ENCODE measurements at regions of chr16 and their contacts with region 1.

Region 1: GRCh38 chr16:1723450-1724147 is 17.6 kb downstream of the MAPK8IP3 start:
- DNase-seq: peak; percentile 60
- H3K4me3 ChIP-seq: no peak overlapping the region
- H3K27ac ChIP-seq: no peak overlapping the region
- H3K4me1 ChIP-seq: peaks cover 9% of the 10 kb centered on the region
- H3K27me3 ChIP-seq: no peaks in the 10 kb centered on the region
- CTCF ChIP-seq: peak; percentile 69 to 70
- POLR2A ChIP-seq: no peak

Region 2: DNA sequence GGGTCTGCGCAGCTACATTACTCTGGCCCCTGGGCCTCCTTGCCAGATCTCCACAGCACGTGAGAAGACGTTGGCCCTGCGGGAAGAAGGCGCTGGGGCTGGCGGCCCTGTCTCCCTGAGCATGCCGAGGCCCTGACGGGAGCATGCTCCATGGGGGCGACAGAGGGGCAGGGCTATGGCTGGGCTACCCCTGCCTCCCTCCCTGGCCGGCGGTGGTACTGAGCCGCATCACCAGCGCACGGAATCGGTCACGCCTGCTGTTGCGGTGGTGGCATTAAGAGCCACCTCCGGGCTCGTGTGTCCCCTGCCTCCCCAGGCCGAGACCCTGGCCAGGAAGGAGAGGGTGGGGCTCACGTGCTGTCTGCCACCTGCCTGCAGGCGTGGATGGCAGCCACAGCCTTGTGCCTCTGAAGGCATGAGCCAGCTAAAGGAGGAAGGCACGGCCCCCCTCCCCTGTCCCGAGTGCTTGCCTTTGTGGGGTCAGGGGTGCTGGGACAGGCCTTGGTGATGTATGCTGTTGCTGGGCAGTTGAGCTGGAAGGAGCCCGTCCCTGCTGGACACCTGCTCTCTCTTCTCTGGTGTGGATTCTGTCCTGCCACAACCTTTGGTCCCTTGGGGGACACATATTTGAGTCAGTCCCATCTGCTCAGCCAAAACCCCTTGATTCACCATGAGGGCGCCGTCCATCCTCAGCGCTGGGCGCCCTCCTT is 10.7 kb after region 1 on chr16:
- CTCF ChIA-PET with region 1: interaction called, 12 read pairs
- POLR2A ChIA-PET with region 1: no interaction called
- dilution Hi-C with region 1: no loop called
- intact Hi-C with region 1: no loop called
- DNase-seq: no peak
- H3K4me3 ChIP-seq: no peak overlapping the region
- H3K27ac ChIP-seq: no peak overlapping the region
- H3K4me1 ChIP-seq: no peaks in the 10 kb centered on the region
- H3K27me3 ChIP-seq: no peaks in the 10 kb centered on the region
- CTCF ChIP-seq: no peak
- POLR2A ChIP-seq: no peak

Measured in endothelial cell of umbilical vein (primary cell).